Gastrocnemius medialis (tissue), 4 donors: ENCODE measurements at regions of chr6 and their contacts with region 1.

Region 1: DNA sequence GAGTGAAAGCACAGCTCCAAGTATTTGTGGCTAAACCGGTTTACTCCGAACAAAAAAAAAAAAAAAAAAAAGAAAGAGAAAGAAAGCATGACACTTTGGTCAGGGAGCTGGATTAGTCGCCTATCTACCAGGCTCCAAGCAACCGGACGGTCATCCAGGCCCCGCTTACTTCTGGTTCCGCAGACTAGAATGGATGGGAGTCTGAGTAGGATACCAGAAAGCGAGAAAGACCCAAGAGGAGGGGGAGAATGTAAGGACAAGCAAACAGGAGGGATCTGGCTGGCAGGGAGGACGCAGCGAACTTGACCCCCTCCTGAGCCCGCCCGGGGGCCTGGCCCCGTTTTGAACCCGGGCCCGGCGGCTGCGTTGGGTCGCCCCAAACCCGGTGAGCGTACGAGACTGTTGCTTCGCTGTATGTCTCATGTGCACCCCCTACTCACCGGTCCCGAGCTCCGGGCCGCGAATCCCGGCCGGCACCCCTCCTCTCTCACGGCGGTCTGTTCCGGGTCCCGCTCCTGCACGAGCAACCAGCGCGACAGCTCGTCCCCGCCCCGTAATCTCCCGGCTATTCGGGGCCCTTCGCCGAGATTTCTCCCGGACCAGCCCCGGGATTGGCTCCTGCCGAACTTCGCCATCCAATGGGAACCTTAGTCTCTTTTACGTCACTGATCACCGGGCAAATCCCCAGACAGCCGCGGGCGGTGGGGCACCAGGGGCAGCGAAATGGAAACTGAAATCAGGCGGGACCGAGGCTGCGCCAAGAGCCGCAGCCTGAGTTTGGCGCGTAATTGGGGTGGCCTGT is at the start of gene TRIM26:
- DNase-seq: peak; percentile 96 to 97
- ATAC-seq: peak; percentile 97 to 98
- H3K4me3 ChIP-seq: peak within 1 kb of the TSS; percentile 62 to 100 (median 92)
- H3K27ac ChIP-seq: peak within 1 kb of the TSS; percentile 91 to 95 (median 92)
- H3K4me1 ChIP-seq: peaks cover 20 to 22% of the 10 kb centered on the region in 2 donors
- H3K27me3 ChIP-seq: no peaks in the 10 kb centered on the region
- CTCF ChIP-seq: no peak
- POLR2A ChIP-seq: peak; percentile 95 to 98
- total RNA-seq, gene TRIM26: 22.8 to 30.9 (median 25.1) TPM

Region 2: DNA sequence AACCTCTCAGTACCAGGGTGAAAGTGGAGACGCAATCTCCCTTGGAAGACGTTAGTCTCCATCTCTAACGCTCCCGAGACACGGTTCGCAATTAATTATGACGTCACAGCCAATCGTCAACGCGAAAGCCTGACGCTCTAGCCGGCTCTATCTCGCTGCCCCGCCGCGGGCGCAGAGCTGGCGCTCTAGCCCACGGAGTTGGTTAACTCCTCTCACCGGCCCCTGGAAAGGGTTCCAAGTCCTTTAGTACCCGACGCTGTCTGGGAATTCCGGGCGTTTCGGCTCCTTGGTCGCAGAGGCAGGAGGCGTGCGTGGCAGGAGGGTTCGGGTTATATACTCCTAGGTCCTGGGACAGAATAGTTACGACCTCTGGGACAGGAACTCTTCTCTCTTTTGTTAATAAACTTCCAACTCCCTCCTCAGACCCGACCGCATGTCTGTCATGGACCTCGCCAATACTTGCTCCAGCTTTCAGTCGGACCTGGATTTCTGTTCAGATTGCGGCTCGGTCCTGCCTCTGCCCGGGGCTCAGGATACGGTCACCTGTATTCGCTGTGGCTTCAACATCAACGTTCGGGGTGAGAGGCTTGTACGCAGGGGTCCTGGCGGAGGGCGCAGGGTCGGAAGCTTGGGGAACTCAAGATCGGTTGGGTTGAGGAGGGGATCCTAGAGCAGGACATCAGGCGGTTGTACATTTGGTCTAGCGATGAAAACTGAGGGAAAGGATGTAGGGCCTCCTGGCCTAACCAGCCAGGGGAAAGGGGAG is 151.8 kb before region 1 on chr6 and contains the start of gene POLR1H:
- in situ Hi-C with region 1: no loop called
- intact Hi-C with region 1: loop called (anchors 2 kb)
- DNase-seq: peak; percentile 90 to 92
- ATAC-seq: peak; percentile 97 to 98
- H3K4me3 ChIP-seq: peak within 1 kb of the TSS; percentile 80 to 98 (median 88)
- H3K27ac ChIP-seq: peak within 1 kb of the TSS; percentile 92 to 97 (median 95)
- H3K4me1 ChIP-seq: peaks cover 27 to 29% of the 10 kb centered on the region in 2 donors
- H3K27me3 ChIP-seq: no peaks in the 10 kb centered on the region
- CTCF ChIP-seq: no peak
- POLR2A ChIP-seq: peak; percentile 87
- total RNA-seq, gene POLR1H: 23.8 to 41.6 (median 27.9) TPM

Region 3: GRCh38 chr6:30259140-30260035 is 46.3 kb after region 1 on chr6:
- in situ Hi-C with region 1: no loop called
- intact Hi-C with region 1: loop called (anchors 2 kb)
- DNase-seq: peak; percentile 50 to 59
- ATAC-seq: peak; percentile 95 to 96
- H3K4me3 ChIP-seq: peak overlapping the region; percentile 70 to 94 (median 84)
- H3K27ac ChIP-seq: peak overlapping the region; percentile 67 to 77 (median 72)
- H3K4me1 ChIP-seq: peaks cover 4 to 10% of the 10 kb centered on the region in 2 donors
- H3K27me3 ChIP-seq: no peaks in the 10 kb centered on the region
- CTCF ChIP-seq: peak in 2 of 5 experiments; percentile 9 to 28
- POLR2A ChIP-seq: peak; percentile 22 to 56

Region 4: DNA sequence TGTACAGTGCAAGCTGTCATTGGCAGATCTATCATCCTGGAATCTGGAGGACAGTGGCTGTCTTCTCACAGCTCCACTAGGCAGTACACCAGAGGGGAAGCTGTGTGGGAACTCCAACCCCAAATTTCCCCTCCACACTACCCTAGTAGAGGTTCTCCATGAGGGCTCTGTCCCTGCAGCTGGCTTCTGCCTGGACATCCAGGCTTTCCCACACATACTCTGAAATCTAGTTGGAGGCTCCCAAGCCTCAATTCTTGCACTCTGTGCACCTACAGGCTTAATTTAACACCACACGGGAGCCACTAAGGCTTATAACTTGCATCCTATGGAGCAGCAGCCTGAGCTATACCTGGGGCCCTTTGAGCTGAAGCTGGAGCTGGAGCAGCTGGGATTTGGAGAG is 70.7 kb after region 1 on chr6:
- in situ Hi-C with region 1: no loop called
- intact Hi-C with region 1: no loop called
- DNase-seq: no peak
- ATAC-seq: no peak
- H3K4me3 ChIP-seq: peak overlapping the region in 1 of 4 donors; percentile 11
- H3K27ac ChIP-seq: no peak overlapping the region
- H3K4me1 ChIP-seq: no peaks in the 10 kb centered on the region
- H3K27me3 ChIP-seq: no peaks in the 10 kb centered on the region
- CTCF ChIP-seq: no peak
- POLR2A ChIP-seq: no peak

Region 5: DNA sequence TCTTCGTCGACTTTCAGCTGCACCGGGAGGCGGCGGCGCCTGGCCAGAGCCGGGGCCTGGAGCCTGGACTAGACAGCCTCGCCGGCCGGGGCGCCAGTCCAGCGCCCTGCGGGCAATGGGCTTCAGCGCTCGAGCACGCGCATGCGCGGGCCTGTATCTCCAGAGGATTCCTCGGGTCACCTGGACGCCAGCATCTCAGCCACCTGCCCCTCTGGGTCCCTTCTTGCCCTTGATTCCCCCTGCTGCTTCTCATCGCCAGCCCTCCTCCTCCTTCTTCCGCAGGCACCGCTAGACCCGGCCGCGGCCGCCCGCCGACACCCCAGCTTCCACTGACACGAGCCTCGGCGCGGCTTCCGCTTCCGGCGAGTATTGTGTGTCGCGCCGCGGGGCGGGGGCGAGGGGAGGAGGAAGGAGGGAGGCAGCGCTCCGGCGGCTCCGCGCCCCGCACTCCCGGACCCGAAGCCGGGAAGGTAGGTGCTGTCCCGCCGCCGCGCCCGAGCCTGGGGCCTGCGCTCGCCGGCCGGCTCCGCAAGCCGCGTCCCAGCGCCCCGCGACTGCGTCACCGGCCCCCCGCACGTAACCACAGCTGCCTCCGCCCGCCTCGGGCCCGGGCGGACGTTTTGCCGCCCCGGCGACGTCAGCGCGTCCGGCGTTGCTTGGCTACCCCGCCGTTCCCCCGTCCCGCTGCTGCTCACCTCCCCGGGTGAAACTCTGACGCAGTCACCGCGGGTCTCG is 113.6 kb after region 1 on chr6 and contains the start of gene TRIM39:
- in situ Hi-C with region 1: loop called in 1 of 4 experiments (anchors 10 kb)
- intact Hi-C with region 1: loop called (anchors 2 kb)
- DNase-seq: peak; percentile 68 to 75
- ATAC-seq: peak; percentile 87 to 88
- H3K4me3 ChIP-seq: peak within 1 kb of the TSS; percentile 80 to 91 (median 88)
- H3K27ac ChIP-seq: peak within 1 kb of the TSS; percentile 94 to 98 (median 96)
- H3K4me1 ChIP-seq: peaks cover 25 to 32% of the 10 kb centered on the region in 2 donors
- H3K27me3 ChIP-seq: no peaks in the 10 kb centered on the region
- CTCF ChIP-seq: peak in 1 of 5 experiments; percentile 26
- POLR2A ChIP-seq: peak; percentile 81 to 87
- total RNA-seq, gene TRIM39: 12.3 to 21.5 (median 14.9) TPM

Region 6: GRCh38 chr6:30600451-30600961 is 387.4 kb after region 1 on chr6:
- in situ Hi-C with region 1: no loop called
- intact Hi-C with region 1: no loop called
- DNase-seq: no peak
- ATAC-seq: no peak
- H3K4me3 ChIP-seq: no peak overlapping the region
- H3K27ac ChIP-seq: no peak overlapping the region
- H3K4me1 ChIP-seq: no peaks in the 10 kb centered on the region
- H3K27me3 ChIP-seq: no peaks in the 10 kb centered on the region
- CTCF ChIP-seq: no peak
- POLR2A ChIP-seq: no peak